Activated T-helper 1 cell treated with anti-CD3 and anti-CD28 coated beads, Interleukin-12 subunit alpha, Interleukin-12 subunit beta, Interleukin-2, Interleukin-4 antibody, amounts not matched to agents 30 ng/mL and 10 ng/mL and 1 ng/mL, durations not matched to agents 14 hours and 24 hours and 36 hours (primary cell): ENCODE measurements at regions of chr21 and their contacts with region 1.

Region 1: DNA sequence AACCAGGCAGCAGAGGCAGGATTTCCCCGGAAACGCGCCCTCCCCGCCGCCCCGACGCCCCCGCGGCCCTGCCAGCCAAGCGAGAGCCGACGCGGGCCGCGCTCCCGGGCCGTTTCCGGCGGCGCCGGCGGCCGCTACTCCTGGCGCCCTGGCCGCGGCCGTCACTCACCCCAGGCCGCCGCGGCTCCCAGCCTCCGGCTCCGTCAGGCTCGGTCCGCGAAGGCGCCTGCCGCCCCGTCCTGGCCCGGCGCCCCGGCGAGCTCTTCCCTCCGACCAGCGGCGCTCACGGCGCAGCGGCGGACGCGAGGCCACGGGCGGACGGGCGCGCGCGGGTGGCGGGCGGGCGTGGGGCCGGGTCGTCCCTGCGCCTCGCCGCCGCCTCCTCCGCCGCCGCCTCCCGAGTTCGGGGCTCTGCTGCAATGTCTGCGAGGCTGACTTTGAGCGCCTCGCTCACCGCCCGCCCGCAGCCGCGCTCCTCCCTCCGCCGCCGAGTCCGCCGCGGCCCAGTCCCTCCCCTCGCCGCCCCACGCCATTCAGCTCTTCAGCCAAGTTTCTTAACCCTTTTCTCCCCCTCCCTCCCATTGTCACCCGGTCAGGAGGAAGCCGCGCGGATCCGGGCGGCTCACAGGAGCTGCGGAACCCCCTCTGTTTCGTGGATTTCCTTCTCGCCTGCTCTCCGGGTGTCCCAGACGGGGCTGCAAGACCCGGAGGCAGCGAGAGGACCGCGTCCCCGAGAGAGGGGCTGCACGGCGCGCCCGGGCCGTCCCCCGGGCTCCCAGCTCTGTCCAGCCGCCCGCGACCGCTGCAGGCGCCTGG is at the start of gene NRIP1:
- DNase-seq: peak; percentile 80
- H3K4me3 Mint-ChIP-seq: peak within 1 kb of the TSS; percentile 93
- H3K27ac Mint-ChIP-seq: peak within 1 kb of the TSS; percentile 88
- H3K4me1 Mint-ChIP-seq: peaks cover 52% of the 10 kb centered on the region
- H3K27me3 Mint-ChIP-seq: peaks cover 25% of the 10 kb centered on the region
- total RNA-seq, gene NRIP1: 11.4 and 11.7 TPM in 2 replicates

Region 2: DNA sequence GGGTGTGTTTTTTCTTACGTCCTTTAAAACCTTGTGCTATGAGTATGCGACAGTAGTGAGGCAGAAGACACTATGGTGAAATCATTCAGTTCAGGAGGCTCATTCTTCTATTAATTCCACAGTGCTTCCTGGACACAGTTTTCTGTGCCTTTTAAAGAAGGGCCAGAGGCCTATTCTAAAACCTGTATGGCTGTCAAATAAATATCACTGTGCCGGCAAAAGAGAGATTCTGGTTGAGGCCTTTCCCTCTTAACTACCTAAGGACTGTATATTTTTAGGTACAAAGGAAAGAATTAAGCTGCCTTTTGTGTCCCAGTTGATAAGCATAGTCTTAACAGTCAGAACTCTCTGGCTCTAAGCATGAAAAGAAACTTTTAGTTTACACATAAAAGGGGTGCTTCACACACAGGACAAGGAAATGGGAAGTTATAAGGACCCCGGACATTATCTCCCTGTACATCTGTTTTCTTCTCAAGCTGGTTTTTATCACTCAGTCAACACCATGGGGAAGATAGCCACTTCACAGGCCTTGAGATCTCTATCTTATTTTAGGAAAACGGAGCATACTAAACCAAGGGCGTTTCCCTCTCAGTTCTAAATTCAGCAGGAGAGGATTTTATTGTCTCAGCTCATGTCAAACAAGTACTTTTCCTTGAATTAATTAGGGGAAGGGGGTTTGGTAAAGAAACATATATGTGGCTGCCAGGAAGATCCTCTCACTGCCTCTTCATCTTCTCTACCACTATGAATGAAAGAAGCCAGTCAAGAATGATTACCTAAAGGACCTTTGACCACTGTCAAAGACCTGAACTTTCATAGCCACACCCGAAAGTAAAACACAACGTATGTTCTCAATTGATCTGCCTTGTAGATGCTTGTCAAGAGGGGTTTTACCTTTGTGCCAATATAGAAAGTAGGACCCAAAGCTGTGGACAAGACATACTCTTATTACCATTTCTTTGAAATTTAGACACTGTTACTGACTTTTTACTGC is 610.5 kb before region 1 on chr21:
- intact Hi-C with region 1: loop called (anchors 5 kb)
- DNase-seq: no peak
- H3K4me3 Mint-ChIP-seq: peak overlapping the region; percentile 62
- H3K27ac Mint-ChIP-seq: peak overlapping the region; percentile 92
- H3K4me1 Mint-ChIP-seq: peaks cover 74% of the 10 kb centered on the region
- H3K27me3 Mint-ChIP-seq: no peaks in the 10 kb centered on the region

Region 3: GRCh38 chr21:15001857-15002606 is 62.8 kb before region 1 on chr21:
- intact Hi-C with region 1: loop called (anchors 5 kb)
- DNase-seq: no peak
- H3K4me3 Mint-ChIP-seq: no peak overlapping the region
- H3K27ac Mint-ChIP-seq: no peak overlapping the region
- H3K4me1 Mint-ChIP-seq: peaks cover 51% of the 10 kb centered on the region
- H3K27me3 Mint-ChIP-seq: no peaks in the 10 kb centered on the region

Region 4: DNA sequence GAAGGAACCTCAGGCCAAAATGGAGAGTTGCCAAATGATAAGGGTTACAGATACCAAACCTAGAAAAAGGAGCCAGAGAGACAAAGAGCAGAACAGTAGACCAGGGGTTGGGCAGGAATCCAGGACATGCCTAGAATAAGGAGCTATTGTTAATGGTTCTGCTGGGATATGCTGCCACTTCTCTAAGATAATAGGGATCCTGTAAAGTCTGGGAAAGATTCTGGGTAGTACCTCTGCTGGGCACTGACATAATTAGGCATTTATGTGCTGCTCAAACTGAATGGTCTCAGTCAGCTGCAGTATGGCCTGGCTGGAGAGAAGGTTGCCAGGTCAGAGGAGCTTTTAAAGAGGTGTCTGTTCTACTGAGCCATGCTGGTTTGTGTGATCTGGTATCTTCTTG is 19.9 kb after region 1 on chr21:
- intact Hi-C with region 1: no loop called
- DNase-seq: no peak
- H3K4me3 Mint-ChIP-seq: no peak overlapping the region
- H3K27ac Mint-ChIP-seq: no peak overlapping the region
- H3K4me1 Mint-ChIP-seq: no peaks in the 10 kb centered on the region
- H3K27me3 Mint-ChIP-seq: no peaks in the 10 kb centered on the region

Region 5: GRCh38 chr21:15437883-15438282 is 373.1 kb after region 1 on chr21:
- intact Hi-C with region 1: loop called (anchors 2 kb)
- DNase-seq: no peak
- H3K4me3 Mint-ChIP-seq: no peak overlapping the region
- H3K27ac Mint-ChIP-seq: peak overlapping the region; percentile 34
- H3K4me1 Mint-ChIP-seq: peaks cover 12% of the 10 kb centered on the region
- H3K27me3 Mint-ChIP-seq: no peaks in the 10 kb centered on the region

Region 6: GRCh38 chr21:15592271-15592860 is 527.6 kb after region 1 on chr21:
- intact Hi-C with region 1: loop called (anchors 5 kb)
- DNase-seq: no peak
- H3K4me3 Mint-ChIP-seq: no peak overlapping the region
- H3K27ac Mint-ChIP-seq: no peak overlapping the region
- H3K4me1 Mint-ChIP-seq: no peaks in the 10 kb centered on the region
- H3K27me3 Mint-ChIP-seq: peaks cover 13% of the 10 kb centered on the region

Region 7: DNA sequence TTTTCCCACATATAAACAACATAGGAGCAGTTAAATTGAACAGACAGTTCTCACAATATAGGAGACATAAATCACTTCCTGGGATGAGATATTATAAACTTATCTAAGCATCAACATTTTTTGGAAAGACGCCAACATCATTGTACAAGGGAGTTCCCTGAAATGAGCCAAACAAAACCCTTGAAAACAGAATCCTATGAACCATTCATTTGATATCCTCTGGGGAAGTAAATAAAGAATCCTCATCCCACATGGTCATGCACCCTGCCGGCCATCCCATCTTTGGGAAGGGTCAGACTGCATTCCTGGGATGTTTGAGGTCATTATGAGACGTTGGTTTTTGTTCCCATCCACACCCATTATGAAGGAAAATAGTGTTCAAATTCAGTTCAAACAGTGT is 553.2 kb after region 1 on chr21:
- intact Hi-C with region 1: no loop called
- DNase-seq: no peak
- H3K4me3 Mint-ChIP-seq: no peak overlapping the region
- H3K27ac Mint-ChIP-seq: no peak overlapping the region
- H3K4me1 Mint-ChIP-seq: no peaks in the 10 kb centered on the region
- H3K27me3 Mint-ChIP-seq: no peaks in the 10 kb centered on the region